Activated CD4-positive, alpha-beta T cell treated with anti-CD3 and anti-CD28 coated beads, Interleukin-2, amount 10 ng/mL, durations not matched to agents 24 days and 14 days (primary cell): ENCODE measurements at regions of chr22 and their contacts with region 1.

Region 1: DNA sequence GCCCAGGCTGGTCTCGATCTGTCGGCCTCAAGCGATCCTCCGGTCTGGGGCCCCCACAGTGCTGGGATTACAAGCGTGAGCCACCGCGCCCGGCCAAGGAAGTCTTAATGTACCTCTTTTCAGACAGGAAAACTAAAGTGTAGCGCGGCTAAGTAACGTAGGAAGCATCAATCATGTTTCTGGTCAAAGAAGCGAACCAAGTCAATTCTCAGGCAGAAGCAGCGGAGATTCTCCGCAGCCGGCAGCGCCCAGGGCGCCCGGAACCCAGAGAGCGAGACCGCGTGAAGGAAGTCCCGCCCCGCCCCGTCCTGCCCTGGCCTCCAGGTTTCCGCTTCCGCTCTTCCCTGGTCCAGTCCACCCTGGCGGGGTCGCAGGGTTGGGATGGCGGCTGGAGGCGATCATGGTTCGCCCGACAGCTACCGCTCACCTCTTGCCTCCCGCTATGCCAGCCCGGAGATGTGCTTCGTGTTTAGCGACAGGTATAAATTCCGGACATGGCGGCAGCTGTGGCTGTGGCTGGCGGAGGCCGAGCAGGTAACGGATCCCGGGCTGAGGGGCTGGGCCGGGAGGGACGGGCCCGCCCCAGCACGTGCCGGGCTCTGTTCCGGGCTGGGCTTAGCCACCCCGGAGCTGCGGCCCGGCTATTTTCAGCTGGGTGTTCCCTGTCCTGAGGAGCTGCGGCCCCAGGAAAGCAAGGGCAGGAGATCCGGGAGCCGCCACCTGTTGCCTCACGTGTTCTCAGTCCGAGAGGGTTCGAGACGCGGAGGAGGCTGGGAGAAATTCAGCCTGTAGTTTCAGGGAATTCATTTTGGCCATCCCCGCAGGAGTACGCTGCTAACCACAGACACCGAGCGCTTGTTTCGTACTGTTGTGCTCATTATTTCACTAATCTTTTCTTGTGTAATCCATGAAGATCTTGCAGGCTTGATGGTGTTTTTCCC is at the start of gene ADSL:
- DNase-seq: peak; percentile 96
- H3K4me3 Mint-ChIP-seq: peak within 1 kb of the TSS; percentile 93
- H3K27ac Mint-ChIP-seq: peak within 1 kb of the TSS; percentile 97
- H3K4me1 Mint-ChIP-seq: peaks cover 38% of the 10 kb centered on the region
- H3K27me3 Mint-ChIP-seq: no peaks in the 10 kb centered on the region
- total RNA-seq, gene ADSL: 172 and 173 TPM in 2 replicates

Region 2: GRCh38 chr22:40107851-40108378 is 238.5 kb before region 1 on chr22:
- intact Hi-C with region 1: loop called (anchors 5 kb)
- DNase-seq: peak; percentile 79
- H3K4me3 Mint-ChIP-seq: peak overlapping the region; percentile 86
- H3K27ac Mint-ChIP-seq: peak overlapping the region; percentile 88
- H3K4me1 Mint-ChIP-seq: peaks cover 39% of the 10 kb centered on the region
- H3K27me3 Mint-ChIP-seq: no peaks in the 10 kb centered on the region

Region 3: DNA sequence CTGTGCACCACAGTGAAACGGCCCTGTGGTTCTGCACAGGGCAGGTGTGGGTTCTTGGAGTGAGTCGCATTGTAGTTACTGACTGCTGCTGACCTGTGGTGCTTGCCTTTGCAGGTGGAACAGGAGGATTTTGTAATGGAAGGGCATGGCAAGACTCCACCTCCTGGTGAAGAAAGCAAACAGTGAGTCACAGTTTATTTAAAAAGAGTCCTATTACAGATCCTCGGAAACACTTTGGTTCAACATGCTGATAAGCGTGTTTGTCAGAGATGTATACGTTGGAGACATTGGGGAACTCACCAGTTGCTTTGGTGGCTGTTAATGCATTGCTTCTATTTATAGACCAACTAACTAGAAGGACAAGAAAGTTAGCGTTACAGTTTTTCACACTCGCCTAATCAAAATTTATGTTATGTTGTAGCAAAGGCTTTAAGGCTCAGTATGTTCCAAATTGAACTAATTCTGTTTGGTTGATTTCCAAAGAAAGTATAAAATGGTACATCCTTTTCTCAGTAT is 190.4 kb before region 1 on chr22:
- intact Hi-C with region 1: no loop called
- DNase-seq: peak; percentile 58
- H3K4me3 Mint-ChIP-seq: no peak overlapping the region
- H3K27ac Mint-ChIP-seq: peak overlapping the region; percentile 51
- H3K4me1 Mint-ChIP-seq: peaks cover 4% of the 10 kb centered on the region
- H3K27me3 Mint-ChIP-seq: no peaks in the 10 kb centered on the region

Region 4: DNA sequence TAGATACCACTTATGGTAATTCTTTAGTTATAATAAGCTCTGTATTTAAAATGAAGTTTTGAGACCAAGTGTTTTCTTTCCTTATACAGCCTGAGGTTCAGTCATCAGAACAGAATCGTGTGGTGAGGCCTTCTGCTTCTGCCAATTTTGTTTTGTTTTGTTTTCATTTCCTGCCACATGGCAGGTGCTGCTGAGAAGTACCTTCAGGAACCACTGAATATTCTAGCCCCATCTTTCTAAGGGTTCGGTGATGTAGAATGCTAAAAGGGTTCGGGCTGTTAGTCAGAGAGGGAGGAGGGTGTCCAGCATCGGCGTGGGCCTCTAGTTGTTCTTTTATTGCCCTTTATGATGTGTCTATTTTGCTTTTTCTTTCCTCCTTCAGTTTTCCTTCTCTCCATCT is 142.9 kb before region 1 on chr22:
- intact Hi-C with region 1: loop called (anchors 5 kb)
- DNase-seq: peak; percentile 83
- H3K4me3 Mint-ChIP-seq: peak overlapping the region; percentile 66
- H3K27ac Mint-ChIP-seq: peak overlapping the region; percentile 81
- H3K4me1 Mint-ChIP-seq: peaks cover 37% of the 10 kb centered on the region
- H3K27me3 Mint-ChIP-seq: no peaks in the 10 kb centered on the region

Region 5: DNA sequence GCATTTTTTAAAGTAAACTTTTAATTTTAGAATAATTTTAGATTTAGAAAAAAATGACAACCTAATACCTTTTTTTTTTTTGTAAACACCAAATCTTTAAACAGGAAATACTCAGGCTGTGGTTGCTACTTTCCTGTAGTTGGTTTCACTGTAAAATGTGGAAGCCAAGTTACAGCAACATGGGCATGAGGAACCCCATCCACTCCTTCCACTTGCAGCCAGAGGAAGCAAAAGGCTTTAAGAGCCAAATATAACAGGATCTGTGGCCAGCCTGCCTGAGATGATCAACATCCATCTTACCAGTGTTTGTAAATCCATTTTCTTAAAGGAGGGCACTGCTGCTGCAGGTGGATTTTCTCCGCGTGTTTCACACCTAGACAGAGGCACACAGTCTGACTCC is 102.6 kb before region 1 on chr22:
- intact Hi-C with region 1: loop called (anchors 5 kb)
- DNase-seq: peak; percentile 72
- H3K4me3 Mint-ChIP-seq: peak overlapping the region; percentile 60
- H3K27ac Mint-ChIP-seq: peak overlapping the region; percentile 42
- H3K4me1 Mint-ChIP-seq: peaks cover 57% of the 10 kb centered on the region
- H3K27me3 Mint-ChIP-seq: no peaks in the 10 kb centered on the region

Region 6: DNA sequence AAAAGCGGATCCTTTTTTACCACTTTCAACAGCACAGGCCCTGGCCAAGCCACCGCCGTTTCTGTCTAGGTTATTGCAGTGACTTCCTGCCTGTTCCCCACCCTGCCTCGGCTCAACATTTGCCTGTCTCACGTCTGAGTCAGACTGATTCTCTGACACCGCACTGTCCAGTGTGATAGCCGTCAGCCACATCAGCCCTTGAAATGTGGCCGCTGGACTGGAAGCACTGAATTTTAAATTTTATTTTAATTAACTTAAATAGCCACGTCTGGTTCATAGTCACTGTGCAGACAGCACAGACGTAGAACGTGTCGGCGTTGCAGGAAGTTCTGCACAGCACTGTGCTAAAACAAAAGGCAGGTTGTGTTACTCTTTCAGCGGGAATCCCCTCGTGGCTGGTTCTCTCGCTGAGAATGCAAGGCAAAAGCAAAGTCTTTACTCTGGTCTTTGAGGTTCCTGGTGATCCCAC is 56.4 kb before region 1 on chr22:
- intact Hi-C with region 1: loop called (anchors 1 kb)
- DNase-seq: peak; percentile 90
- H3K4me3 Mint-ChIP-seq: peak overlapping the region; percentile 79
- H3K27ac Mint-ChIP-seq: peak overlapping the region; percentile 93
- H3K4me1 Mint-ChIP-seq: peaks cover 43% of the 10 kb centered on the region
- H3K27me3 Mint-ChIP-seq: no peaks in the 10 kb centered on the region

Region 7: DNA sequence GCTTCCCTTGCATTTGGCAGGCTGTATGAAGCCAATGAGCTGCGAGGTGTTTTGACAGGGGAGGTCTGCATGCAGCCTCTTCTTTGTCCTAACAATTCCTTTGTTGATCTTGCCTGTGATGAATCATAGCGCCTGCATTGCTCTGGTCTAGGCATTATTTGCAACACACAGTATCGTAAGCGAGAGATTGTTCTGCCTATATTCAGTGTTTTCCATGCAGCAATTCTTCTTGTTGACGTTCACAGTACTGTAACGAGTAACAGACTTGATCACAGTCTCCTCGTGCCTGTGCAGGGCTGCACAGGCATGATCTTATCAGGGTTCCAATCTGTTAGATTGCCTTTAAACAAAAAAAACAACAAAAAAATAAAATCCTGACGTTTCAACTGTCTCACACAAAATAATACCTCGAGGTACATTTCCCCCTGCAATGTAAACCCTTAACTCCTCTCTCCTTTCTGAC is 14.1 kb before region 1 on chr22:
- intact Hi-C with region 1: loop called (anchors 2 kb)
- DNase-seq: peak; percentile 69
- H3K4me3 Mint-ChIP-seq: peak overlapping the region; percentile 84
- H3K27ac Mint-ChIP-seq: peak overlapping the region; percentile 93
- H3K4me1 Mint-ChIP-seq: peaks cover 68% of the 10 kb centered on the region
- H3K27me3 Mint-ChIP-seq: no peaks in the 10 kb centered on the region

Region 8: DNA sequence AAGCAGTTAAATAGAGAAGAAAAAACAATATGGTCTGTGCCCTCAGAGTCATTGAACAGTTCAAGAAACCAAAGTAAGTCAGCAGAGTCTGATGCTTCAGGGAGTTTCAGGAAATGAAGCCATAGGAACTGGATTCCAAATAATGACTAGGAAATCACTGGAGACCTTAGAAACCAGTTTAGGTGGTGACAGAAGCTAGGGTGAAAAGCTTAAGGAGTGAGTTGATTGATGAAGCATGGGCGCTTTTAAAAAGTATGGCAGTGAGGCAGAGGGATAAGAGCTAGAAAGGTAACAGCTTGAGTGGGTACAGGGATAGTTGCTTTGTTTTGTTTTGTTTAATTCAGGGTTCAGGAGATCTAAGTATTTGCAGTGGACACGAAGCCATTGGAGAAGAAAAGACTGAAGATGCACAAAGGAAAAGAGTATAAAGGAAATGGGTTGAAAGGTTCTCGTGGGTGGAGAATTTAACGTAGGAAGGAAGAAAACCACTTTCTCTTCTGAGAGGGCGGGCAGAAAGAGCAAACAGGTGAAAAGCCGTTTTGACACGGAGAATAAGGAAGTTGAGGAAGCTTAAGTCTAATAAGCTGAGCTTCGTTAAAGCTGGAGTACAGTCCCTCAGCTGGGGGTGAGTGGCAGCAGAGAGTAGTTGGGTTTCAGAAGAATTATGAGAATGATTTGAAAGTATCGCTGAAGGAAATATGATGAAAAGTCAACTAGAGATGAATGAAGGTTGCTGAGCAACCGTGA is 38.8 kb after region 1 on chr22:
- intact Hi-C with region 1: no loop called
- DNase-seq: peak; percentile 80
- H3K4me3 Mint-ChIP-seq: peak overlapping the region; percentile 77
- H3K27ac Mint-ChIP-seq: peak overlapping the region; percentile 89
- H3K4me1 Mint-ChIP-seq: peaks cover 47% of the 10 kb centered on the region
- H3K27me3 Mint-ChIP-seq: no peaks in the 10 kb centered on the region

Region 9: GRCh38 chr22:40469181-40469580 is 122.7 kb after region 1 on chr22:
- intact Hi-C with region 1: no loop called
- DNase-seq: no peak
- H3K4me3 Mint-ChIP-seq: no peak overlapping the region
- H3K27ac Mint-ChIP-seq: peak overlapping the region; percentile 41
- H3K4me1 Mint-ChIP-seq: peaks cover 8% of the 10 kb centered on the region
- H3K27me3 Mint-ChIP-seq: no peaks in the 10 kb centered on the region

Region 10: DNA sequence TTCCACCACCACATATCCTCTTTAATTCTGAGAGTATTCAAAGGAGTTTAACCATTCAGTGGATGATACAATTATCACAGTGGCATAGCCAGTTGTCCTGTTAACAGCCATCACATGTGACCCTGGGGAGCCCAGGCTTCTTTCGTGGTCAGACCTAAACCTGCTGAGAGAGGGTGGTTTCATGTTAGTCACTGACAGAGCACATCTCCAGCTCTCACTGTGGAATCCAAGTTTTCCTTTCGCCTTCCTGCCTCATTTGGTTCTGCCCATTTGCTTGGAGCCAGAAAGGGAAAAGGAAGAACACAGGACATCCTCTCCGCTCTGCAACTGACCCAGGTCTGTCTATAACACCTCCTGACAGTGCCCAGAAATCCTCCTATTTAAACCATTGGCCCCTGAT is 393.3 kb after region 1 on chr22:
- intact Hi-C with region 1: no loop called
- DNase-seq: no peak
- H3K4me3 Mint-ChIP-seq: no peak overlapping the region
- H3K27ac Mint-ChIP-seq: no peak overlapping the region
- H3K4me1 Mint-ChIP-seq: peaks cover 2% of the 10 kb centered on the region
- H3K27me3 Mint-ChIP-seq: peaks cover 3% of the 10 kb centered on the region